ENCODE measurements at regions of chr3 and their contacts with region 1.

Region 1: GRCh38 chr3:160003520-160004128 is 15.0 kb downstream of the IL12A start:
- DNase-seq: peak; percentile 50
- ATAC-seq: peak; percentile 91
- H3K4me3 ChIP-seq: no peak overlapping the region
- H3K27ac ChIP-seq: no peak overlapping the region
- H3K4me1 ChIP-seq: no peaks in the 10 kb centered on the region
- H3K27me3 ChIP-seq: no peaks in the 10 kb centered on the region
- CTCF ChIP-seq: peak; percentile 88

Region 2: DNA sequence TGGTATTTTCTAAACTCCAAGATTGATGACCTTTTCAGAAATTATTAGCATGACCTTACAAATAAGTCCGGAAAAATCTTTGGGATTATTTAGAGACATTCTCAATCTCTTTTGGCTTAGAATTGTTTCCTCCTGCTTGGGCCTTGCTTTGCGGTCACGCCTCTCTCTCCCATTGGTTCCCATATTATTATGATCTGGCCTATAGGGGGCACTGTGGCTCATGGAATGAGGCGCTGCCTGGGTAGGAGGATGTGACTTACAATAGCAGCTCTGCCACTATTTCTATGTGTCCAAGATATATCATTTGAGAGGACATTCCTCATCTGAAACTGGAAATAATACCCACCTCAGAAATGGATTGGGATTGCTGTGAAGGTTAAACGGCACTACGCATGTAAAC is 736.8 kb before region 1 on chr3:
- CTCF ChIA-PET with region 1: no interaction called
- POLR2A ChIA-PET with region 1: no interaction called
- in situ Hi-C with region 1: no loop called
- intact Hi-C with region 1: loop called (anchors 5 kb)
- DNase-seq: no peak
- ATAC-seq: no peak; the same call in 1 of the 2 replicates
- H3K4me3 ChIP-seq: no peak overlapping the region
- H3K27ac ChIP-seq: no peak overlapping the region
- H3K4me1 ChIP-seq: peaks cover 2% of the 10 kb centered on the region; the same call in 1 of the 2 replicates
- H3K27me3 ChIP-seq: peaks cover 2% of the 10 kb centered on the region; the same call in 1 of the 2 replicates
- CTCF ChIP-seq: peak; percentile 73

Region 3: DNA sequence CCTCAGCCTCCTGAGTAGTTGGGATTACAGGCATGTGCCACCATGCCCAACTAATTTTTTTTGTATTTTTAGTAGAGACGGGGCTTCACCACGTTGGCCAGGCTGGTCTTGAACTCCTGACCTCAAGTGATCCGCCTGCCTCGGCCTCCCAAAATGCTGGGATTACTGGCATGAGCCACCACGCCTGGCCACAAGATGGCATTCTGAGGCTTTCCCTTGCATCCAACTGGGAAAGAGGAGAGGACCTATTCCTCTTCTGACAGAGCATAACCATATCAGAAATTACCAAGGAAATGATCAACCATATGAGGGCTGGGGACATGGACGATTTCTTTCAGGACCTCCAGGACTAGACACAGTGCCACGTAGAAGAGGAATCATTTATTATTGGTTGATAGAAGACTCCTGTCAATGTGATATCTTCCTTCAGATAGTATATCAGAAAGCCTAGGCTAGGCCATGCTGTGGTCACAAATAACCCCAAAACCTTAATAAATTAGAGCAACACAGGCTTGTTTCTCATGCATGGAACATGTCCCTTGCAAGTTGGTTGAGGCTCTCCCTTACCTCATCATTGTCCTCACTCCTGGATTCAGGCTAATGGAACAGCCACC is 387.3 kb before region 1 on chr3:
- CTCF ChIA-PET with region 1: no interaction called
- POLR2A ChIA-PET with region 1: no interaction called
- in situ Hi-C with region 1: no loop called
- intact Hi-C with region 1: loop called (anchors 10 kb)
- DNase-seq: no peak
- ATAC-seq: peak; percentile 75
- H3K4me3 ChIP-seq: no peak overlapping the region
- H3K27ac ChIP-seq: no peak overlapping the region
- H3K4me1 ChIP-seq: peaks cover 26% of the 10 kb centered on the region
- H3K27me3 ChIP-seq: no peaks in the 10 kb centered on the region
- CTCF ChIP-seq: peak; percentile 86

Region 4: GRCh38 chr3:159804726-159805410 is 198.8 kb before region 1 on chr3:
- CTCF ChIA-PET with region 1: no interaction called
- POLR2A ChIA-PET with region 1: no interaction called
- in situ Hi-C with region 1: no loop called
- intact Hi-C with region 1: no loop called
- DNase-seq: peak; percentile 73
- ATAC-seq: peak; percentile 99
- H3K4me3 ChIP-seq: no peak overlapping the region
- H3K27ac ChIP-seq: no peak overlapping the region; the same call in 1 of the 2 replicates
- H3K4me1 ChIP-seq: peaks cover 20% of the 10 kb centered on the region
- H3K27me3 ChIP-seq: no peaks in the 10 kb centered on the region
- CTCF ChIP-seq: peak; percentile 96

Region 5: DNA sequence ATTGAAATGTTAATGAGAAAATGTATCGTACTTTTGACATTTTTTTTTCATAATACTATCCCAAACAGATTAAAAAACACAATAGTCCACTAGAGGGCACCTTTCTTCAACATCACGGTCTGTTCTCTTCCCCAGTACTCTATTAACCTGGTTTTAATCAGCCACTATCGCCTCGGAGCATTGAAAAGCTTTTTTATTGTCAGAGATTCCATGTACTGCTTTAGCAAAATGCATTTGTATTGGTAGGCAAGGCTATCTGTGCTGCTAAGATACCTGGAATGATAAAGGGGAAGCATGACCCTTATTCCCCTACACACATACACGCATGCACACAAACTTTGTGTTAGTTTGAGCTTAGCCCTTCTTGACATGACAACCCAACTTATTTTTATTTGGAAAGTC is 175.1 kb before region 1 on chr3:
- CTCF ChIA-PET with region 1: interaction called, 10 read pairs
- POLR2A ChIA-PET with region 1: no interaction called
- in situ Hi-C with region 1: no loop called
- intact Hi-C with region 1: loop called (anchors 2 kb)
- DNase-seq: no peak
- ATAC-seq: peak; percentile 88
- H3K4me3 ChIP-seq: no peak overlapping the region
- H3K27ac ChIP-seq: peak overlapping the region; percentile 52; the same call in 1 of the 2 replicates
- H3K4me1 ChIP-seq: peaks cover 26% of the 10 kb centered on the region
- H3K27me3 ChIP-seq: no peaks in the 10 kb centered on the region
- CTCF ChIP-seq: peak; percentile 71

Region 6: GRCh38 chr3:159884661-159885402 is 118.8 kb before region 1 on chr3:
- CTCF ChIA-PET with region 1: interaction called, 50 read pairs
- POLR2A ChIA-PET with region 1: no interaction called
- in situ Hi-C with region 1: no loop called
- intact Hi-C with region 1: loop called (anchors 1 kb)
- DNase-seq: peak; percentile 54
- ATAC-seq: peak; percentile 81
- H3K4me3 ChIP-seq: no peak overlapping the region
- H3K27ac ChIP-seq: no peak overlapping the region
- H3K4me1 ChIP-seq: no peaks in the 10 kb centered on the region
- H3K27me3 ChIP-seq: no peaks in the 10 kb centered on the region
- CTCF ChIP-seq: peak; percentile 79

Region 7: GRCh38 chr3:159988617-159989271 is 14.9 kb before region 1 on chr3 and contains the start of gene IL12A:
- CTCF ChIA-PET with region 1: interaction called, 12 read pairs
- POLR2A ChIA-PET with region 1: no interaction called
- in situ Hi-C with region 1: no loop called
- intact Hi-C with region 1: no loop called
- DNase-seq: no peak
- ATAC-seq: peak; percentile 98
- H3K4me3 ChIP-seq: peak within 1 kb of the TSS; percentile 59 to 67
- H3K27ac ChIP-seq: no peak within 1 kb of the TSS
- H3K4me1 ChIP-seq: no peaks in the 10 kb centered on the region
- H3K27me3 ChIP-seq: no peaks in the 10 kb centered on the region
- CTCF ChIP-seq: peak; percentile 99
- total RNA-seq, gene IL12A: not detected